ENCODE measurements at regions of chr19 and their contacts with region 1.

Region 1: GRCh38 chr19:31372246-31372778 is 23.1 kb upstream of the TSHZ3 start:
- DNase-seq: no peak
- H3K4me3 ChIP-seq: no peak overlapping the region
- CTCF ChIP-seq: no peak
- POLR2A ChIP-seq: no peak

Region 2: DNA sequence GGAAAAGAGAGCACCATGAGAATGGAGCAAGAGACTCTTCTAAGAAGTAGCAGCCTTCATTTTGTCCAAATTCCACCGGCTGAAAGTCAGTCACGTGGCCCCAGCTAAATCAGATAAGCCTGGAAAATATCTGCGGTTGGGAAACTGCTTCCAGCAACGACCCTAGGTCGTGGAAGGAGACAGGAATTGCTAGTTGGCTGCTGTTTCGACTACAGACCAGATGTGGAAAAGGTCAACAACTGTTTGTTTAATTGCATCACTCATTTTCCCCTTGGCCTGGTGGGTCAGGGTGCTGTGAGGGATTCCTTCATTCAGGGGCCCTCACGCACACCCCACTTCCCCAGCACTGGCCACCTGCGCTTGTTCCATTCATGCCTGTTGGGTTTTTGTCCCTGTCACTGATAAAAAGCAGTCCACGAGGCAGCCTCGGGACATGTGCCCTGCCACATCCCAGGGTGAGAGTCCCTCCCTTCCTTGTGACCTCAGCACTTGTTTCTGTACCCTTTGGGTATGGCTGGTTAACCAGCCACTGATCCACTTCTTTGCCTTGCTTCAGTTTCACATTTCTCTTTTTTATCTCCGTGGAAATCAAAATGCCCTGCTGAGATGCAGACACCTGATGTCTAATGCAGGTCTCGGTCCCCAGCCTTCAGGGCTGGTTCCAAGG is 892.9 kb before region 1 on chr19:
- intact Hi-C with region 1: loop called (anchors 5 kb)
- DNase-seq: peak in 1 of 2 donors; percentile 37
- H3K4me3 ChIP-seq: no peak overlapping the region
- CTCF ChIP-seq: no peak
- POLR2A ChIP-seq: no peak

Region 3: DNA sequence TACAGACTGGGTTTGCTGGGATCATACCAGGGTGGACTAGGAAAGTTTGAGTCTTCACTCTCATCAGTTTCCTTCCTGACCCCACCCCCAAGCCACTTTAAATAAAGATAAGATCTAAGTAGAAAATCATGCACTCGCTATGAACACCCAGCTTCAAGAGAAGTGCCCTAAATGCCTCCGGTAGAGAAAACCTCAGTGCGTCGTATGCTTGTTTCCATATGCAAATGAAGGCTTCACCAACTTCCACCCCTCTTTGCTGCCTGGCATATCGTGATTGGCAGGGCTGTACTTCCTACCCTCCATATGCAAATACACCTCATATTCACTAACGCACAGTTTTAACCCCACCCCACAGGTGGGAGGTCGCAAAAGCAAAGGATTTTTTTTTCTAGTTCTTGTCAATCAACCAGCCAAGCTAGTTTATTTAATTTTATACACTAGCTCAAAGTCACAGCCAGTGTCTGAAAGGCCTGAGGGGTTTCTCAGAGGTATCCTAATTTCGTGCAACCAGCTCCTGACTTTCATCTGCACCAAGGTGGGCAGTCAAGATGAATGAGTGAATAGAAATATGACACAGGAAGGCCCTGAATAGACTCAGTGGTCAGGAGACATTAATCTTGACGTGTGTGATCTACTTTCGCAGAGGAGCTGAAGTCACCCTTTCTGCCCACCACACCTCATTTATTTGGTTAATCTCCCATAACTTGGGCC is 98.1 kb after region 1 on chr19:
- intact Hi-C with region 1: no loop called
- DNase-seq: no peak
- H3K4me3 ChIP-seq: no peak overlapping the region
- CTCF ChIP-seq: no peak
- POLR2A ChIP-seq: no peak